ENCODE measurements at regions of chr12 and their contacts with region 1.

Region 1: GRCh38 chr12:49358483-49359141 is 8.7 kb upstream of the SPATS2 start:
- DNase-seq: peak; percentile 79
- ATAC-seq: peak; percentile 90
- H3K4me3 Mint-ChIP-seq: no peak overlapping the region
- H3K27ac Mint-ChIP-seq: no peak overlapping the region
- H3K4me1 Mint-ChIP-seq: peaks cover 8% of the 10 kb centered on the region
- H3K27me3 Mint-ChIP-seq: peaks cover 37% of the 10 kb centered on the region

Region 2: DNA sequence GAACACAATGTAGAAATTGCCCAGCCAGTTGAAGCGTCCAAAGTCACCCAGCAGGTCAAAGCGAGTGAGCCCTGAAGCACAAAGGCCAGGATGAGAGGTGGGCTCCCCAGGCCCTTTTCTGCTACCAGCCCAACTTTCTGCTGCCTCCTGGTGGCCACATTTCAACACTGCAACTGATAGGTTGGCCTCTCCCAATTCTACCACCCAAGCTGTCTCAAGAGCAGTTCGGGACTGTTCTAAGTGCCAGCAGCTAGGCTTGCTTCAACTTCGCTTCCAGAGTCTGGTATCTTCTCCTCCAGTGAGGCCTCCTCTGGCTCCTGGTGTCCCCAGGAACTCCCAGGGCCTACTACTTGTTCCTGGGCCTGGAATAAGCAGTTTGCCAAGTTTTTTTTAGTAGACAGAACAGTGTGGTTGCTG is 260.6 kb before region 1 on chr12:
- CTCF ChIA-PET with region 1: no interaction called
- POLR2A ChIA-PET with region 1: no interaction called
- DNase-seq: peak; percentile 75
- ATAC-seq: peak; percentile 70
- H3K4me3 Mint-ChIP-seq: no peak overlapping the region
- H3K27ac Mint-ChIP-seq: no peak overlapping the region
- H3K4me1 Mint-ChIP-seq: peaks cover 13% of the 10 kb centered on the region
- H3K27me3 Mint-ChIP-seq: peaks cover 22% of the 10 kb centered on the region

Region 3: GRCh38 chr12:49219417-49220026 is 139.1 kb before region 1 on chr12:
- CTCF ChIA-PET with region 1: no interaction called
- POLR2A ChIA-PET with region 1: no interaction called
- DNase-seq: no peak
- ATAC-seq: no peak
- H3K4me3 Mint-ChIP-seq: no peak overlapping the region
- H3K27ac Mint-ChIP-seq: no peak overlapping the region
- H3K4me1 Mint-ChIP-seq: no peaks in the 10 kb centered on the region
- H3K27me3 Mint-ChIP-seq: peaks cover 8% of the 10 kb centered on the region

Region 4: DNA sequence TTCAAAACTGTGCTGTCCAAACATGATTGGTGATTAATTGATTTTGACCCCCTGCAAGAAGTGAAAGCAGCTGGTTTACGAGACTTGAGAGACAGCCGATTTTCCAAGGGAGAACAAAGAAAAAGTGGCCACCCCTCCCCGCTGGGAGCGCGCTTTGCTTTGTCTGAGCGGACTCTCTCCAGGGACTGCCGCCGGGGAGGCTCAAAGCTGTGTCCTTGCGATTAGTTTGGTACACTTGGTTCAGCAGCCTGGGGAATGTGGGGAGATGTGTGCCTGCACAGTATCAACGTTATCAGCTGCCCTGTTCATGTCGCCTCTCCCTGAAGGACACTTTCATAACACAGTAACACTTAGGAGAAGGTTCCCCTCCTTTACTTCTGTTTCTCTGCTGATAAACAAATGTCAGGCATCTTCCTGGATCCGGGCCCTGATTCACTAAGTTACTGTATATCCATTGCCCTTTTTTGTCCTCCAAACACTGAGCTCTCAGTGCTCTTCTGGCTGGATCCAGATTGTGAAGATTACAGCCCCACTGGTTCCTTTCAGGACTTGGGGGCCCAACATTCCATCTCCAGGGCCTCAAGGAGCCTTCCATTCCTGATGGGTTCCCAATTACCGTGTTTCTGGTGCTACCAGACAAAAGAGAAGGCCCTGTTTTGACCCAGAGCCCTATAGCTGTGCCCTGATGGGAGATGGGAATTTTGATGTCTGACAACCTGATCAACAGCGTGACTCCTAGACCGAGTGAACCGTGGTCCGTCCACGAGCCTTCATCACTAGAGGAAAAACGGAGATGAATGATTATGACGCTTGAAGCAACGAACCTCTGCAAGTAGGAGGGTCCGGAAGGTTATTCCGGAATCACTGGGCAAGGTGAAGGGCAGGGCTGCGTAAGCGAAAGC is 125.4 kb before region 1 on chr12:
- CTCF ChIA-PET with region 1: no interaction called
- POLR2A ChIA-PET with region 1: no interaction called
- DNase-seq: no peak
- ATAC-seq: no peak
- H3K4me3 Mint-ChIP-seq: no peak overlapping the region
- H3K27ac Mint-ChIP-seq: peak overlapping the region; percentile 29
- H3K4me1 Mint-ChIP-seq: peaks cover 21% of the 10 kb centered on the region
- H3K27me3 Mint-ChIP-seq: peaks cover 10% of the 10 kb centered on the region

Region 5: DNA sequence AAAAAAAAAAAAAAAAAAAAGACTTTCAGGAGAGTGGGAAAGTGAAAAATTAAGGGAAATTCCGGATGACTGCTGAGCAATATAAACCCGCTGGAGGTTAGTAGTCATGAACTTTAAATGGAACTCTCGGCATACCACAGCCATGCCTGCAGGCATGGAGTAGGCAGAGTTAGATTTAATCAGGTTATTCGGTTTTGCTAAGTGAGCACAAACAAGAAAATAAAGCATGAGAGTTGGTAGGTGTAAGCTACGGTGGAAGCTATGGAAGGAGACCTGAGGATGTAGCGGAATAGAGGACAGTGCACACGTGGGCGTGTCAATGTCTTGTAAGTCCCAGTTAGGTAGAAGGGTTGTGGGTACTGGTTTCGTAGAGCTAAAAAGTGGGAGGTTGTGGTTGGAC is 105.5 kb before region 1 on chr12:
- CTCF ChIA-PET with region 1: no interaction called
- POLR2A ChIA-PET with region 1: no interaction called
- DNase-seq: no peak
- ATAC-seq: no peak
- H3K4me3 Mint-ChIP-seq: no peak overlapping the region
- H3K27ac Mint-ChIP-seq: no peak overlapping the region
- H3K4me1 Mint-ChIP-seq: peaks cover 6% of the 10 kb centered on the region
- H3K27me3 Mint-ChIP-seq: no peaks in the 10 kb centered on the region

Region 6: DNA sequence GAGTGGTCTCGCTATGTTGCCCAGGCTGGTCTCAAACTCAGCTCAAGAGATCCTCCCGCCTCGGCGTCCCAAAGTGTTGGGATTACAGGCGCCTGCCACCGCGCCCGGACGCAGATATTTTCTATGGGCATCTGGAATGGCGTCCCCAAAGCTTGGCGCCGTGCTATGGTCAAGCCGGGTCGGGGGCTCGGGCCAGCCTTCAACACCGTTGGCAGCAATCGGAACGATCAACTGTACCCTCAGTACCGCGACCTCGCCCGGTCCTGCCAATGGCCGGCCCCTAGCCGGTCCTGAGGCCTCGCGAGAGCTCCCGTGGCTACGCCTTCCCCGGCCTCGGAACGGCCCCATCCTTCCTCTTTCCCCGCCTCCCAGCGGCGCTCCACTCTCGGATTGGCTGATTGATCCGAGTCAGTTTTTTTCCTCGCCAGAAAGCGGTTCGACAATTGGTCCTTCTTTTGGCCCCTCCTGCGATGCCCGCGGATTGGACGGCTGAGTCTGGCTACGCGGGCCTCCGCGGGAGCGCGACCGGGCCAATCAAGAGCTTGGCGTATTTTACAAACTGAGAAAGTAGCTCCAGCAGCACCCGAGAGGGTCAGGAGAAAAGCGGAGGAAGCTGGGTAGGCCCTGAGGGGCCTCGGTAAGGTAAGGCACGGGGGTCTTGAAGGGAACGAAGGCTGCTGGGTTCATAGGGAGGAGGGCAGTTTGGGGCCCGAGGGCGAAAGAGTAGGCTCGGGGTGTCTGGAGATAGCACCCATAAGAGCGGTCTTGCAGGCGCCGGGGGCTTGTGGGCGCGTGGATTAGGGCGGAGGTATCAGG is 35.7 kb before region 1 on chr12 and contains the start of gene TROAP:
- CTCF ChIA-PET with region 1: interaction called, 12 read pairs
- POLR2A ChIA-PET with region 1: no interaction called
- DNase-seq: peak; percentile 99
- ATAC-seq: peak; percentile 99
- H3K4me3 Mint-ChIP-seq: peak within 1 kb of the TSS; percentile 100
- H3K27ac Mint-ChIP-seq: peak within 1 kb of the TSS; percentile 99
- H3K4me1 Mint-ChIP-seq: peaks cover 32% of the 10 kb centered on the region
- H3K27me3 Mint-ChIP-seq: peaks cover 2% of the 10 kb centered on the region
- total RNA-seq, gene TROAP: 107 to 111 TPM

Region 7: DNA sequence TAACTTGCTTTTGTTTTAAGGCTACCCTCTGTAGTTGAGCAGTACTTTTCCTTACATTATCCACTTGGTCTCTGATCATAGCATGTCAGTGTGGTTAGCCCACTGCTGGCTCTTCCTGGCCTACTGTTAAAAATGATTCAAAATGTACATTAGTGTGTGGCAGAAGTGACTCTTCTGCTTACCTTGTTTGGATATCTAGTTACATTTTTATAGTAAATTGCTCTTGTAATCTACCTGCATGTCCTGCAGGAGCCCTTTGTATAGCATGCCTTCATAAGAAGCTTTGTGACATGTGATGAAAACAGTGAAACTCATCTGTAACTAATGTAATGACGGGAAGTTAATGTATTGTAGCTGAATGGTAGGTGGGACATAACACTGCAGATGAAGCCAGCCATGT is 16.8 kb after region 1 on chr12:
- CTCF ChIA-PET with region 1: interaction called, 84 read pairs
- POLR2A ChIA-PET with region 1: no interaction called
- DNase-seq: no peak
- ATAC-seq: no peak
- H3K4me3 Mint-ChIP-seq: no peak overlapping the region
- H3K27ac Mint-ChIP-seq: no peak overlapping the region
- H3K4me1 Mint-ChIP-seq: peaks cover 14% of the 10 kb centered on the region
- H3K27me3 Mint-ChIP-seq: no peaks in the 10 kb centered on the region

Region 8: GRCh38 chr12:49503674-49504180 is 145.1 kb after region 1 on chr12:
- CTCF ChIA-PET with region 1: interaction called, 37 read pairs
- POLR2A ChIA-PET with region 1: no interaction called
- DNase-seq: no peak
- ATAC-seq: no peak
- H3K4me3 Mint-ChIP-seq: no peak overlapping the region
- H3K27ac Mint-ChIP-seq: no peak overlapping the region
- H3K4me1 Mint-ChIP-seq: peaks cover 9% of the 10 kb centered on the region
- H3K27me3 Mint-ChIP-seq: no peaks in the 10 kb centered on the region

Region 9: GRCh38 chr12:49553512-49554088 is 195.0 kb after region 1 on chr12:
- CTCF ChIA-PET with region 1: interaction called, 22 read pairs
- POLR2A ChIA-PET with region 1: no interaction called
- DNase-seq: peak; percentile 47
- ATAC-seq: peak; percentile 56
- H3K4me3 Mint-ChIP-seq: no peak overlapping the region
- H3K27ac Mint-ChIP-seq: no peak overlapping the region
- H3K4me1 Mint-ChIP-seq: peaks cover 17% of the 10 kb centered on the region
- H3K27me3 Mint-ChIP-seq: peaks cover 4% of the 10 kb centered on the region

Region 10: GRCh38 chr12:49636979-49637755 is 278.6 kb after region 1 on chr12:
- CTCF ChIA-PET with region 1: interaction called, 16 read pairs
- POLR2A ChIA-PET with region 1: no interaction called
- DNase-seq: peak; percentile 79
- ATAC-seq: peak; percentile 89
- H3K4me3 Mint-ChIP-seq: no peak overlapping the region
- H3K27ac Mint-ChIP-seq: peak overlapping the region; percentile 28
- H3K4me1 Mint-ChIP-seq: peaks cover 31% of the 10 kb centered on the region
- H3K27me3 Mint-ChIP-seq: no peaks in the 10 kb centered on the region

Measured in activated CD8-positive, alpha-beta T cell treated with anti-CD3 and anti-CD28 coated beads, Interleukin-2, amount 10 ng/mL, durations not matched to agents 7 days and 5 days (primary cell).